PC-3 (cell line): ENCODE measurements at regions of chr13 and their contacts with region 1.

Region 1: DNA sequence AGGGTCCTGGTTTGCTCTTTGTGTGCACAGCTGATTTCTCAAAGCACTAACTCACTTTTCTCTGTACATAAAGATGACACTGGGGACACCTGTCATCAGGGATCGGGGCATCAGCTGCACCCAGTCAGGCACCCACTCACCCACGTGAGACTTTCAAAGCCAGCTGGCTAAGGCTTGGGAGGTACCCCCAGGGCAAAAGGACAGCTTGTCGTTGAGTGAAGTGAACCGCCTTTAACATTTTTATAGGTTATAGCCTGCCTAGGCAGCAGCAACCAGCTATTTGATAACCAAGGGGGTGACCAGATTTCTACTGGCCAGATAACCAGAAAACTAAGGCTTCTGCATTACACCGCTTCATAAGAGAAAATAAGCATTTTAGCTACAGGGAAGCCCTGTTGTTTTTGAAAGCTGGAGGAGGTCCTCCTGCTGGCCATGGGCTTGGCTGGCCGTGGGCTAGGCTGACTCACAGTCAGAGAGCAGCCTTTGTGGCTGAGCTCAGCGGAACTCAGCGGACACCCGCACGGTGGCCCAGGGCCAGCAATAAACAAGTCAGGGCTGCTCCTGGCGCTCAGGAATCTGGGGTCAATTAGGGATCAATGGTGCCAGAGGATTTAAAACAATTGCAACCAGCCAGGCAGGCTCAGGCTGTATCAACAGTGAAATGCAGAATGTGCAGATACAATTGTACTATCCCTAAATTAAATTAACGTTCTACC is 57.1 kb downstream of the ALOX5AP start:
- DNase-seq: peak; percentile 91
- ATAC-seq: peak; percentile 84
- H3K4me3 ChIP-seq: no peak overlapping the region; the same call in 1 of the 2 replicates
- H3K27ac ChIP-seq: peak overlapping the region; percentile 39
- H3K4me1 ChIP-seq: peaks cover 39% of the 10 kb centered on the region
- H3K27me3 ChIP-seq: no peaks in the 10 kb centered on the region
- CTCF ChIP-seq: peak; percentile 26; the same call in 1 of the 2 replicates

Region 2: DNA sequence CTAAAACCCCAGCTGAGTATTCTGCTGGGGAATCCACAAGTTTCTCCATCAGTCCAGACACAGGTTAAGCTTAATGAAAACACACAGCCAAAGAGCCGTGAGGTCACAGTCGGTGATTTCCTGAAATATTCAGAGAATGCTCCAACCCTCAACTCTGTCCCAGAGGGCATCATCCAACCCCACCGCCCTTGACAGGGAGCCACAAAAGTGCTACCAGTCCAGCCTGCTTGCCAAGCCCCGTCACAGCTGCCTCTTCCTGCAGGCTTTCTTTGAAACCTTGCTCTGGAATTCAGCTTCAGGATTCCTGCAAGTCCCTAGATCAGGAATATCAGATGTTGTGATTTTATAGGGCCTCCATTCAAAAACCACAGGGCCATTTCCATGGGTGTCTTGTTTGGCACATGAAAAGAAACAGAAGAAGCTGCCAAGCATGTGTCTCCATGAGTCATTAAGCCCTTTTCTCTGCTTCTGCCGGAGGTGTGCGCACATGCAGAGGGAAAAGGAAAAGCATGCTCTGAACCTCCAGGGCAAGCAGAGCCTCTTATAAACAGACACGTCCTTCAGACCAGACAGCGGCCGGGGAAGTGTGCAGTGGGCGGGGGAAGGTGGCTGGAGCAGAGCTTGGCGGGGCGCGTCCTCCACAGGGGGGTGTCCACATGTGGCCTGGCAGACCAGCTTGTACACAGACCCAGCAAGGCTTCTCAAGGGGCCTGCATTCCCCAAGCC is 649.8 kb before region 1 on chr13:
- CTCF ChIA-PET with region 1: no interaction called
- POLR2A ChIA-PET with region 1: no interaction called
- intact Hi-C with region 1: loop called (anchors 1 kb)
- DNase-seq: peak; percentile 90
- ATAC-seq: peak; percentile 88
- H3K4me3 ChIP-seq: no peak overlapping the region; the same call in 1 of the 2 replicates
- H3K27ac ChIP-seq: peak overlapping the region; percentile 70
- H3K4me1 ChIP-seq: peaks cover 21% of the 10 kb centered on the region
- H3K27me3 ChIP-seq: no peaks in the 10 kb centered on the region
- CTCF ChIP-seq: no peak

Region 3: DNA sequence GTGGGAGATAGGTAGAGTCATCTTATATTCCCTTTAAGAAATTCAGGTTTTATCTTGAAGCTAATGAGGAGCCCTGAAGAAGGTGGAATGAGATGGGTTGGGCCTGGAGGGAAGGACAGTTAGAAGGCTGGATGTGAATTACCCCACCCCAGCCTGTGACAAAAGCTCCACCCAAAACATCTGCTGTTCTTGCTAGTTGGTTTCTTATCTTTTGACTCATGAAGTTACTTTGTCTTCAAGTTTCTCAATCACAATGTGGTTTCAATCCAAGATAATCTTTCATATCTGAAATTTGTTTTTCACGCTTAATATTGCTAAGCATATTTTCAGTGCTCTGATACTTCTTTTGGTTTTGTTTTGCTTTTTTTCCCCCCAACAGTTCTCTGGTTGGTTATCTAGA is 288.4 kb before region 1 on chr13:
- CTCF ChIA-PET with region 1: no interaction called
- POLR2A ChIA-PET with region 1: no interaction called
- intact Hi-C with region 1: no loop called
- DNase-seq: no peak
- ATAC-seq: no peak
- H3K4me3 ChIP-seq: no peak overlapping the region
- H3K27ac ChIP-seq: no peak overlapping the region
- H3K4me1 ChIP-seq: no peaks in the 10 kb centered on the region
- H3K27me3 ChIP-seq: no peaks in the 10 kb centered on the region
- CTCF ChIP-seq: no peak

Region 4: GRCh38 chr13:30718661-30719524 is 73.5 kb before region 1 on chr13:
- CTCF ChIA-PET with region 1: no interaction called
- POLR2A ChIA-PET with region 1: no interaction called
- intact Hi-C with region 1: loop called (anchors 2 kb)
- DNase-seq: peak; percentile 91
- ATAC-seq: peak; percentile 82
- H3K4me3 ChIP-seq: peak overlapping the region; percentile 12; the same call in 1 of the 2 replicates
- H3K27ac ChIP-seq: peak overlapping the region; percentile 68
- H3K4me1 ChIP-seq: peaks cover 48% of the 10 kb centered on the region
- H3K27me3 ChIP-seq: no peaks in the 10 kb centered on the region
- CTCF ChIP-seq: no peak